ENCODE measurements at regions of chr15 and their contacts with region 1.

Region 1: DNA sequence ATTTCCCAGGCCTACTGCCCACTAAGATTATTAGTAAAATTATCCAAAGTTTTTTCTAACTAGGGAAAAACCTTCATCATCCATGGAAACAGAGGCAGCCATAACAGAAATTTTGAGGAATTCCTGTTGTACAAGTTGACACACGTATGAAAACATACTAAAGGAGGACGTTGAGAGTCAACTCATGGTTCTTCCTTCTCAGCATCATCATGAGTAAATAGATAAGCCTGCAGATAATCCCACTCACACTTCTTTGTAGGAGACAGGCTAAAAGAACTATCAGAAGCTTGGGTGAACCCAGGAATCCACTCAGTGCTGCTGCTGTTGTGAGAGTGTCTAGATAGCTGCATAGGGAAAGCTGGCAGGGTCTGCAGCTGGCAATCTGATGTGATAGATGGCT is 694.8 kb upstream of the NR2F2 start:
- DNase-seq: no peak
- H3K4me3 ChIP-seq: no peak overlapping the region
- H3K27ac ChIP-seq: peak overlapping the region; percentile 71
- H3K4me1 ChIP-seq: peaks cover 13% of the 10 kb centered on the region
- H3K27me3 ChIP-seq: no peaks in the 10 kb centered on the region
- CTCF ChIP-seq: no peak

Region 2: DNA sequence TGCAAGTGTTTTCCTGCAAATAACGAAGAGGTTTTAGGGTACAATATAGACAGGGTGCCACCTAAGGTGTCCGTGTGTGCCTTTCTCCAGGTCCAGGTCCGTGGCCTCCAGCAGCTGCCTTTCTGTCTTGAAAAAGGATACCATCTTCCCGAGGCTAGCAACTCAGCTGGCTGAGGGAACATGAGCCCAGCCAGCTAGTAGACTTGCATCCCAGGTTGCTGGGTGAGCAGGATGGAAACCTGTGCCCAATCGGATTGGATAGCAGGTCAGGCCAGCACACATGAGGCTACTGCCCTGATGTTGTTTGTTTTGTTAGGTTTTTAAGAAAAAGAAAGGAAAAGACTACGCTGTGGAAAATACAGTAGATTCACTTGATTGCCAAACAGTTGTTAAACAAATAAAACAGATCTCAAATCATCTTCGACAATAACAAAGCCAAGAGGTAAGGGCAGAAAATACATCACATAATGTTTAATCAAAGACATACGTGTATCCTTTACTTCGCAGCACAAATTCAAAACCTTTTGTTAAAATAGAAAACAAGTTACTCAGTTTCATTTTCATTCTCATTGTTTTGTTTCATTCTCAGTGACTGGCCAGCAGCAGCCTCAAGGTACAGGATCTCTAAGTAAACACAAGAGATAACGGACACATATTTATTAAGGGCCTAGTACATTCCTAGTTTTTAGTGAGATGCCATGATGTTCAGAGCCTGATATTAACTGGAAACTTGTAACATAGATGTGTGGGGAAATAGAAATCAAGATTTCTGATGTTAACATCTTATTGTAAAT is 33.7 kb after region 1 on chr15:
- CTCF ChIA-PET with region 1: interaction called, 10 read pairs
- POLR2A ChIA-PET with region 1: no interaction called
- intact Hi-C with region 1: no loop called
- DNase-seq: no peak
- H3K4me3 ChIP-seq: no peak overlapping the region
- H3K27ac ChIP-seq: no peak overlapping the region
- H3K4me1 ChIP-seq: no peaks in the 10 kb centered on the region
- H3K27me3 ChIP-seq: no peaks in the 10 kb centered on the region
- CTCF ChIP-seq: no peak

Measured in PC-9 (cell line).